ENCODE measurements at regions of chr1 and their contacts with region 1.

Region 1: GRCh38 chr1:236064674-236065508 is at the start of gene NID1:
- DNase-seq: peak; percentile 98
- H3K4me3 ChIP-seq: peak within 1 kb of the TSS; percentile 82 to 94 (median 90)
- H3K27ac ChIP-seq: peak within 1 kb of the TSS; percentile 97 to 100 (median 100)
- H3K4me1 ChIP-seq: peaks cover 0 to 65% (median 58%) of the 10 kb centered on the region in 4 donors
- H3K27me3 ChIP-seq: no peaks in the 10 kb centered on the region
- CTCF ChIP-seq: peak in 2 of 4 experiments; percentile 31 to 38
- EP300 ChIP-seq: peak in 3 of 4 donors; percentile 40 to 85 (median 61)
- POLR2A ChIP-seq: peak; percentile 85 to 86
- total RNA-seq, gene NID1: 136 to 242 (median 145) TPM

Region 2: DNA sequence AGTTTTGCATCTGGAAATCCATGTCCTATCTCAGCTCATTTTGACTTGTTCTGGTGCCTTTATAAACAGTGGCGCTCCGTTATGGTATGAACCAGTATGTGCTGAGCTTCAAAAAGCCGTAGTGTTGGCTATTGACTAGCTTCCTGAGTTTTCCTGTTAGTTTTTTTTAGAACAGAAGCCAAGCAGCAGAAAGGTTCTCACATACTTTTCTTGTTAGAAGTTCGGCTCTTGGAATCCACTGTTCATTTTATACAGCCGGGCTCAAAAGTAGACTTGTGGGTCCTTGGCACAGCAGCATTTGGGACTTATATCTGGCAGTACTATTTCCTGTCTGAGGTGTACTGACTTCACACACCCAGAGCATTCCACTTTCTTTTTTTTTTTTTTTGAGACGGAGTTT is 633.9 kb before region 1 on chr1:
- intact Hi-C with region 1: no loop called
- DNase-seq: no peak
- H3K4me3 ChIP-seq: no peak overlapping the region
- H3K27ac ChIP-seq: no peak overlapping the region
- H3K4me1 ChIP-seq: peaks cover 0 to 5% (median 0%) of the 10 kb centered on the region in 4 donors
- H3K27me3 ChIP-seq: no peaks in the 10 kb centered on the region
- CTCF ChIP-seq: no peak
- EP300 ChIP-seq: no peak
- POLR2A ChIP-seq: no peak

Region 3: DNA sequence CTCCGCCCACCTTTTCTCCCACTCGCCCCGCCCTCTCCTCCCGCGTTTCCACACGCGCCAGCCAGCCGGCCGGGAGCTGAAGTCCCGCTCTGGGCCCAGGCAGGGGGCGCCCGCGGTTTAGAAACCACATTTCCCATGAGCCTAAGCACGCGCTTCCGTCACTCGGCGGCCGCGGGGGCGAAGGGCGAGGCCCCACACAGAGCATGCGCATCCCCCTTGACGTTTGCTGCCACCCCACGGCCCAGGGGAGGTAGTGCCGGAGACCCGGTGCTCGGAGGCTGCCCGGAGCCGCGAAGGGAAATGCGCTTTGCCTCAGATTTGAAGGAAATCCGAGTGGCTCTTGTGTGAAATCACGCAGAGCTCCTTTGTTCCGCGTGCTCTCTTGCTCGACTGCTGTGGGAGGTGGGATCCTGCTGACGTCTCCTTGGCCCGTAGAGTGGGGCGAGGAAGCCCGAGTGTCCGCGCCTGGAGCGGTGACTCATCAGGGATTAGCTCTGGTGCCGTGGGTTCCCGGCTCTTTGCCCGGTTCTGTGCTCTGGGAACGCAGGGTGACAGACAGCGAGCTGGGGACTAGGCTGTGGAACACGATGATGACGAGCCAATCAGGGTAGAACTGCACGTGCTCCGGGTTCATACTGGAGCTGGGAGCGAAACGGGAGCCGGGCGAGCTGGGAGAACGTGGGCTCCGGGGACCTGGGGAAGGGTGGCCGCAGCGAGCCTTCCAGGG is 560.2 kb before region 1 on chr1:
- intact Hi-C with region 1: loop called (anchors 10 kb)
- DNase-seq: peak; percentile 100
- H3K4me3 ChIP-seq: peak overlapping the region; percentile 73 to 92 (median 84)
- H3K27ac ChIP-seq: peak overlapping the region; percentile 98 to 100 (median 100)
- H3K4me1 ChIP-seq: peaks cover 0 to 29% (median 16%) of the 10 kb centered on the region in 4 donors
- H3K27me3 ChIP-seq: no peaks in the 10 kb centered on the region
- CTCF ChIP-seq: peak; percentile 78 to 94 (median 86)
- EP300 ChIP-seq: peak in 2 of 4 donors; percentile 44 to 95
- POLR2A ChIP-seq: peak; percentile 32 to 64

Region 4: GRCh38 chr1:236021424-236022135 is 43.3 kb before region 1 on chr1:
- intact Hi-C with region 1: loop called (anchors 5 kb)
- DNase-seq: peak; percentile 89
- H3K4me3 ChIP-seq: no peak overlapping the region
- H3K27ac ChIP-seq: peak overlapping the region; percentile 65 to 83 (median 82)
- H3K4me1 ChIP-seq: peaks cover 0 to 62% (median 54%) of the 10 kb centered on the region in 4 donors
- H3K27me3 ChIP-seq: no peaks in the 10 kb centered on the region
- CTCF ChIP-seq: no peak
- EP300 ChIP-seq: no peak
- POLR2A ChIP-seq: no peak